ENCODE measurements at regions of chr4 and their contacts with region 1.

Region 1: DNA sequence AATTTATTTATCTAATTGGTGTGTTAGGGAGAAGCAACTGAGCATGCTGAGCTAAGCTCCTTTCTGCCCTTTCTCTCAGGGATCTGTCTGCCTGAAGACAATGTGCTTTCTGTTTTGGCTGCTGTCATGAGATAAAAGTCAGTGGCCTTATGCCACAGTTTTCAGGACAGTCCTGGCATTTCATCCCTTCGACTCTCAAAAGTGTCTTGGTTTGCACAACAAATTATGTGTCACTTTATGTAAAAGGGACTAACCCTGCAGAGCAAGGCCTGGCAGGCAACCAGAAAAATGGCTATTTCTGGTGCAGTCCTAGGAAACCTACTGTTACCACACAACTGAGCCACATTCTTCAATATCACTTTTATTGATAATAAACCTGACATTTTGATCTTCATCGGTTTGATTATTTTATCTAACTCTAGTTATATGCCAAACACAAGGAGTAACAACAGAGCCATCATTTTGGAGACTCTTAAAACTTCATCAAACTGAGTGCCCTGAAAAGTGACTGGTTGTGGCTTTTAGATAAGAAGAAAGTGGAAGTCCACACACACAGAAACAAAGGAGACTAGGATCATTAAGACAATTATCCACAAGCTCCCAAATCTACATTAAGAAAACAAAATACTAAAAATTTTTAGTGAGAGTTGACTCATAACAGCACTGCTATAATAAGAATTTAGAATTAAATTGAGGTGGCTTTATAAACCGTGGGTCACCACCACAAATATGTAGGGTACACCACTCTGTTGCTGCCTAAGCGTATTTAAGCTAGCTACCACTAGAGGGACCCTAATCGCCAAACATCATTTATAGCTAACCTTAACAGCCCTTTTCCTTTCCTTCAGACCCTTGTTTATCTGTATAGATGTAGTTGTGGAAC is 95.9 kb upstream of the PTPN13 start:
- DNase-seq: no peak
- ATAC-seq: peak; percentile 89
- H3K4me3 Mint-ChIP-seq: no peak overlapping the region
- H3K27ac Mint-ChIP-seq: no peak overlapping the region
- H3K4me1 Mint-ChIP-seq: peaks cover 15% of the 10 kb centered on the region
- H3K27me3 Mint-ChIP-seq: peaks cover 15% of the 10 kb centered on the region

Region 2: DNA sequence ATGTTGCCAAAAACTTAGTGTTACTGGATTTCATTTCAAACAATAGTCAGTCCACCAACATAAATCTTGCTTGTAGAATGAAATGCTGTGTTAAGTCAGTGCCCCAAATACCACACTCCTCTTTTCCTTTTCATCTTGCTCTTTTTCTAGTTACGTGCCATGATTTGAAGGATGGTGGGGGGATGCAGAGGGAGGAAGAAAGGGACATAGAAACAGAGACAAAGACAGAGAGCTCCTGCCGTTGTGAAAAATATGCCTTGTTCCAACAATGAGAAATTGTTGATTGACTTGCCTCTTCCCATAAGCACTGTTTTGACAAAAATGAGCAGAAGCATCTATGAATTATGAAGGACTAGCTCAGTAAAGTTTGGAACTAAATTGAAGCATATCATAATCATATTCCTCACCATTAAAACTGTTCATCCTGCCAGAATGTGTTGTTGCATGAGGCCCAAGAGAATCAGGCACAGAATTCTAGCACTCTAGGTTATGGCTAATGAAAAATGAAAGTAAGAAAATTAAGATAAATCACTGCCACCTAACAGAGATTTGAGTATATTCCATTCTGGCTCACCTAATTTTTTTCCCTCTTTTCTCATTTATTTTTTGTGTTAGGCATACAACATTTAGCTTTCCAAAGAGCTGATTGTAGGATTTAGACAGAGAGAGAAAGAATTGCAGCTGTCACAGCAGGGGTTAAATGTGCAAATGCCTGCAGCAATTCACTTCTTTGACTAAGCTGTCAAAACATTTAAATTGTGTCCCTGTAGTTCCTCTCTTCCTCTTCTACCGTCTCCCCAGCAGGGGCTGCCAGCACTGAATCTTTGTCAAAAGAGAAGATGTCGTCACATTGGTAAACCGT is 15.7 kb before region 1 on chr4:
- CTCF ChIA-PET with region 1: interaction called, 12 read pairs
- POLR2A ChIA-PET with region 1: no interaction called
- DNase-seq: no peak
- ATAC-seq: no peak
- H3K4me3 Mint-ChIP-seq: no peak overlapping the region
- H3K27ac Mint-ChIP-seq: no peak overlapping the region
- H3K4me1 Mint-ChIP-seq: peaks cover 3% of the 10 kb centered on the region
- H3K27me3 Mint-ChIP-seq: peaks cover 5% of the 10 kb centered on the region

Region 3: GRCh38 chr4:86508436-86508835 is 10.2 kb after region 1 on chr4:
- CTCF ChIA-PET with region 1: interaction called, 12 read pairs
- POLR2A ChIA-PET with region 1: no interaction called
- DNase-seq: no peak
- ATAC-seq: no peak
- H3K4me3 Mint-ChIP-seq: no peak overlapping the region
- H3K27ac Mint-ChIP-seq: no peak overlapping the region
- H3K4me1 Mint-ChIP-seq: no peaks in the 10 kb centered on the region
- H3K27me3 Mint-ChIP-seq: peaks cover 6% of the 10 kb centered on the region

Region 4: GRCh38 chr4:86895692-86896488 is 397.7 kb after region 1 on chr4:
- CTCF ChIA-PET with region 1: interaction called, 31 read pairs
- POLR2A ChIA-PET with region 1: no interaction called
- DNase-seq: peak; percentile 26
- ATAC-seq: no peak
- H3K4me3 Mint-ChIP-seq: no peak overlapping the region
- H3K27ac Mint-ChIP-seq: no peak overlapping the region
- H3K4me1 Mint-ChIP-seq: peaks cover 3% of the 10 kb centered on the region
- H3K27me3 Mint-ChIP-seq: peaks cover 16% of the 10 kb centered on the region